ENCODE measurements at regions of chr9 and their contacts with region 1.

Region 1: DNA sequence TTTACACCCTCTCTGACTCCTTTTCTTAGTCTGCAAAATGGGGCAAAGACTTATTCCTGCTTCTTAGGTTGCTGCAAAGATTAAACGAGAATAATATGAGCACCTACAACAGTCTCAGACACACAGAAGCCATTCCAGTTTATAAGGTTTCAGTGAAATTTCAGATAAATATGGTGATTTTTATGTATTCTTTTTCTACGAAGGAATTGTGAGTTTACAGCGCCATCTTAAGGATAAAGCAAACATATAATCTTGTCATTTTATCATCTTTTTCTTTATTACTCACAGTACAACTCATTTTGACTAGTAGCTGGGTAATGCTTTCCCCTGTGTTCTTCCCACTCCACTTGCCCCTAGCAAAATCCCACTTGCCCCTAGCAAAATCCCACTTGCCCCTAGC is 29.2 kb upstream of the SMC5 start:
- DNase-seq: peak; percentile 33
- H3K4me3 Mint-ChIP-seq: no peak overlapping the region
- H3K27ac Mint-ChIP-seq: no peak overlapping the region
- H3K4me1 Mint-ChIP-seq: no peaks in the 10 kb centered on the region
- H3K27me3 Mint-ChIP-seq: no peaks in the 10 kb centered on the region
- CTCF ChIP-seq: peak; percentile 29

Region 2: DNA sequence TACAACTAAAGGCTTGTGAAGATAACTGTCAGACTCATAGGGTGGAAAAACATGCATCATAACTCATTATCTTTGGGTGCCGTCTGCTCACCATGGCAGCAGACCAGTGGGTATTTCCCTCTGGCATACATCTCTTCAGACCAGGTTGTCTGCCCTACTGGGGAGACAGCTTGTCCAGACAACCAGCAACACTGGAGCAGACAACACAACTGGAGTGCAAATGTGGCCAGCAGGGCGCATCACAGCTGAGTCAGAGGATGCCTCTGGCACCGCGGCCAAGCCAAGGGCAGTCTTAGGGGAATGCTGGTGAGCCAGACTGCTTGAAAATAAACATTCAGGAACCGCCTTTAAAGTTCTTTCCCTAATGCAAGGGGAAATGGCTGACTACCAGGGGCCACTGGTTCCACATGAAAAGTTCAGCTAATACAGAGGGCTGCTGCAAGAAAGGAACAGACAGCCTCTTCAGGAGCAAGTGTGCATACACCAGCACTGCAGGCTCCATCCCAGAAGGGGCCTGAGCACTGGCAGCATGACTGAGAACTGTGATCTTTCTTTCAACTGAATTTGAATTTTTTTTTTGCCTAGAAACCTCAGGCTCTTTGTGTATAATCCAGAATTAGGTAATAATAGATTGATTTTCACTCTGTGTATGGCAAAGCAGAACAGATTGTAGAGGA is 108.6 kb before region 1 on chr9:
- CTCF ChIA-PET with region 1: interaction called, 7 read pairs
- POLR2A ChIA-PET with region 1: interaction called, 3 read pairs
- intact Hi-C with region 1: loop called (anchors 1 kb)
- DNase-seq: peak; percentile 85
- H3K4me3 Mint-ChIP-seq: no peak overlapping the region
- H3K27ac Mint-ChIP-seq: no peak overlapping the region
- H3K4me1 Mint-ChIP-seq: peaks cover 29% of the 10 kb centered on the region
- H3K27me3 Mint-ChIP-seq: no peaks in the 10 kb centered on the region
- CTCF ChIP-seq: peak; percentile 7

Region 3: DNA sequence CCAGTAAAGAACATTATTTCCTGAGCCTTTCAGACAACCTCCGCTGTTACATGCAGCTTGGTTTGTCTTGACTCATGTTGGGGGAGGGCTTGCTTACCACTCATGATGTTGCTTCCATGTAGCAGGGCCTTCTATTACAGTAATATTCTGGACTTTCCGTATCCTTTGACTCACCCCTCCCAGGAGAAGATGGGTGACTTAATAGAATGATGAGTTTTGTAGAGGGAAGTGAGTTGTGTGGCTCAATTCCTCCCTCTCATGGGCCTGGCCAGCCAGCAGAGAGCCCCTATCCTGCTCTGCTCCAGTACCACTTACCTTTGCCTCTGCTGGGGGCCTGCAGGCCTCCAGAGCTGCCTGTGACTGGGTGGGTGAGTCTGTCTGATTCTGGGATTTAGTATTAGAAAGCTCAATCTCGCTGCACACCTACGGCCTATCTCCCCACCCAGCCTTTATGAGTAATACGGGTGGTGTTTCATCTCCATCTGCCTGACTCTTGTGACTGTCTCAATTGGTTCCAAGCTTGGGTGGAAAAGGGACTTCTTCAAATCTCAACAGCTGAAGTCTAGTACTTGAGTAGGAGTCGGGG is 237.5 kb after region 1 on chr9:
- CTCF ChIA-PET with region 1: no interaction called
- POLR2A ChIA-PET with region 1: no interaction called
- intact Hi-C with region 1: no loop called
- DNase-seq: peak; percentile 65
- H3K4me3 Mint-ChIP-seq: no peak overlapping the region
- H3K27ac Mint-ChIP-seq: no peak overlapping the region
- H3K4me1 Mint-ChIP-seq: peaks cover 15% of the 10 kb centered on the region
- H3K27me3 Mint-ChIP-seq: no peaks in the 10 kb centered on the region
- CTCF ChIP-seq: no peak

Measured in MCF 10A (cell line).